Esophagus muscularis mucosa (tissue), 4 donors: ENCODE measurements at regions of chr19 and their contacts with region 1.

Region 1: GRCh38 chr19:3618144-3618810 is 8.3 kb downstream of the CACTIN start:
- DNase-seq: no peak
- H3K4me3 ChIP-seq: peak overlapping the region; percentile 18 to 39 (median 26)
- H3K27ac ChIP-seq: peak overlapping the region; percentile 38 to 70 (median 50)
- H3K4me1 ChIP-seq: peaks cover 8 to 53% (median 34%) of the 10 kb centered on the region in 4 donors
- H3K27me3 ChIP-seq: no peaks in the 10 kb centered on the region
- CTCF ChIP-seq: peak; percentile 98 to 99 (median 98)
- EP300 ChIP-seq: no peak
- POLR2A ChIP-seq: no peak

Region 2: DNA sequence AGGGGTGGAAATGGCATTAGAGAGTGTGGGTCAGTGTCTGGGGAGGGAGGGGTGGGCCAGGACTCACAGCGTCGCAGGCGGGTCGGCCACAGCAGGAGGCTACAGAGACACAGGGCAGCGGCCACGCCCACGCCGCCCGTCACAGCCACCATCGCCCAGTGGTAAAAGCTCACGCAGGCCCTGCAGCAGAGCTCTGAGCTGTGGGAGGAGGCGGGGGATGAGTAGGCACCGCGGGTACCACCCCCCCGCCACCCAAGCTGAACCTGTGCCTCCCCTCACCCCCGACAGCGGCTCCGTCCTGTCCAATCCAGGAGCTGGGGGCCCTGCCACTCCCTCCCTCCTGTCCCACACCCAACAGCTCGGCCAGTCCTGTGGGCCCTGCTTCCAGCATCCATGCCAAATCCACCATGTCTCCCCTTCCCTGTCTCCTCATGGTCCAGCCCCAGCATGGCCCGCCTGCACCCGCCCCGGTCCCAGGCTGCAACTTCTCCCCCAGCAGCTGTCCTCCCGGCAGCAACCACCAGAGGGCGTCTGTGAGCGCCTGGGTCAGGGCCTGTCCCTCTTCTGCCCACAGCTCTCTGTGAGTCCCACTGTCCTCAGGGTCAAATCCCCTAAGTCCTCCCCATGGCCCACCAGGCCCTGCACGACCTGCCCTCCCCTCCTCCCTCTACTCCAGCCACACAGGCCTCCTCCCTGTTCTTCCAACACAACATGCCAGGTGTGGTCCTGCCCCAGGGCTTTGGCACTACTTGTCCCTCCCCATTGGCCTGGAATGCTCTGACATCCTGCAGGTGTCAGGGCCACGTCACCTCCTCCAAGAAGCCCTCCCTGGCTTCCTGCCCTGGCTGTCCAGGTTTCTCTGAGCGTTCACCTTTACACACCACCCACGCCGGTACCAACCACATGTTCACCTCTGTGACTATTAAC is 73.3 kb before region 1 on chr19:
- intact Hi-C with region 1: loop called (anchors 1 kb)
- DNase-seq: no peak
- H3K4me3 ChIP-seq: no peak overlapping the region
- H3K27ac ChIP-seq: no peak overlapping the region
- H3K4me1 ChIP-seq: peaks cover 0 to 27% (median 11%) of the 10 kb centered on the region in 4 donors
- H3K27me3 ChIP-seq: no peaks in the 10 kb centered on the region
- CTCF ChIP-seq: peak; percentile 94 to 99 (median 95)
- EP300 ChIP-seq: no peak
- POLR2A ChIP-seq: no peak

Region 3: GRCh38 chr19:3557461-3558248 is 60.6 kb before region 1 on chr19 and contains the start of gene MFSD12:
- intact Hi-C with region 1: loop called (anchors 5 kb)
- DNase-seq: peak; percentile 98
- H3K4me3 ChIP-seq: peak within 1 kb of the TSS; percentile 70 to 95 (median 84)
- H3K27ac ChIP-seq: peak within 1 kb of the TSS; percentile 82 to 87 (median 84)
- H3K4me1 ChIP-seq: peaks cover 27 to 54% (median 53%) of the 10 kb centered on the region in 4 donors
- H3K27me3 ChIP-seq: no peaks in the 10 kb centered on the region
- CTCF ChIP-seq: peak in 1 of 3 experiments; percentile 25
- EP300 ChIP-seq: no peak
- POLR2A ChIP-seq: no peak
- total RNA-seq, gene MFSD12: 28.2 to 87.0 (median 62.4) TPM

Region 4: GRCh38 chr19:3575260-3575741 is 43.0 kb before region 1 on chr19:
- intact Hi-C with region 1: loop called (anchors 5 kb)
- DNase-seq: no peak
- H3K4me3 ChIP-seq: no peak overlapping the region
- H3K27ac ChIP-seq: peak overlapping the region in 1 of 4 donors; percentile 80
- H3K4me1 ChIP-seq: peaks cover 21 to 74% (median 59%) of the 10 kb centered on the region in 4 donors
- H3K27me3 ChIP-seq: no peaks in the 10 kb centered on the region
- CTCF ChIP-seq: peak in 1 of 3 experiments; percentile 27
- EP300 ChIP-seq: no peak
- POLR2A ChIP-seq: no peak

Region 5: GRCh38 chr19:3586707-3587346 is 31.4 kb before region 1 on chr19:
- intact Hi-C with region 1: loop called (anchors 1 kb)
- DNase-seq: no peak
- H3K4me3 ChIP-seq: peak overlapping the region; percentile 15 to 55 (median 20)
- H3K27ac ChIP-seq: peak overlapping the region; percentile 61 to 84 (median 66)
- H3K4me1 ChIP-seq: peaks cover 14 to 27% (median 26%) of the 10 kb centered on the region in 4 donors
- H3K27me3 ChIP-seq: peaks cover 0 to 15% (median 0%) of the 10 kb centered on the region in 4 donors
- CTCF ChIP-seq: no peak
- EP300 ChIP-seq: no peak
- POLR2A ChIP-seq: no peak